ENCODE measurements at regions of chr1 and their contacts with region 1.

Region 1: GRCh38 chr1:212477014-212477679 is 44.4 kb downstream of the NENF start:
- DNase-seq: peak; percentile 86
- ATAC-seq: peak; percentile 93
- H3K4me3 Mint-ChIP-seq: no peak overlapping the region
- H3K27ac Mint-ChIP-seq: no peak overlapping the region
- H3K4me1 Mint-ChIP-seq: peaks cover 25% of the 10 kb centered on the region
- H3K27me3 Mint-ChIP-seq: peaks cover 20% of the 10 kb centered on the region

Region 2: DNA sequence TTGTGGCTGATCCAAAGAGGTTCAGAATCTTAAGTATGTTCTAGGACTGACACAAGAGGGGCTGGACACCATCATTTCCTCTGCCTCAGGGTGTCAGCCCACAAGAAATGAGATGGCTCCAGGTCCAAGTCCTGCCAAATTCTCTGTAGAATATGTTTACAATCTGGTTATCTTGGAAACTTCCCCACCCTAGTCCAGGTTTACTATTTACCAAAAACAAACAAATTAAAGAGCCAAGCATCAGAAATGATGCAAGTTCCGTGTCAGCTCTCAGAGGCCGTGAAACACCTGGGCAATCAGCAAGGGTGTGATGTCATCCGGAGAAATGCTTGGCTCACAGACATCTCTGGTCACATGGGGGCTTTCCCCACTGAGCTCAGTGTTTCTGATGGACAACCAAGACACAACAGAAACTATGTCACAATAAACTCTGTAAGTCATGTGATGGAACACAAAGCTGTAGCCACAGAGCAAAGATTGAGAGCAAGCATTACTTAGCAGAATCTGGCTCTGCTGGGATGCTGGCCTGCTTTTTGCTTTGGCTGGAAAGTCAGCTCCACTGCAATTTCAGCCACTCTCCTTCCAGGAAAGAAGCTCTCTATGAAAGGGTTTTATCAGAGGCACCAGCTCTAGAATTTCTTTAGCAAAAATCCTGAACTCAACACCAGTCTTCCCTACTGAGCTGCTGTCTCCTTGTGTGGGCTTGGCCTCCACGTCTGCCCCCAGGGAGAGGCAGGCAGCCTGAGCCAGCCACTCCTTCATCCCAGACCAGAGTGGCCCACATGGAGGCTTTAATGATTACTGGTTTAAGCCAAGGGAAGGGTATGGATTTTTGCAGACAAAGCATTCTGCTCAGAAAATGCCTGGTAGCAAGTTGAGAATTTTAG is 11.5 kb after region 1 on chr1:
- CTCF ChIA-PET with region 1: interaction called, 20 read pairs
- DNase-seq: peak; percentile 54
- ATAC-seq: peak; percentile 55
- H3K4me3 Mint-ChIP-seq: no peak overlapping the region
- H3K27ac Mint-ChIP-seq: no peak overlapping the region
- H3K4me1 Mint-ChIP-seq: peaks cover 11% of the 10 kb centered on the region
- H3K27me3 Mint-ChIP-seq: peaks cover 8% of the 10 kb centered on the region

Region 3: DNA sequence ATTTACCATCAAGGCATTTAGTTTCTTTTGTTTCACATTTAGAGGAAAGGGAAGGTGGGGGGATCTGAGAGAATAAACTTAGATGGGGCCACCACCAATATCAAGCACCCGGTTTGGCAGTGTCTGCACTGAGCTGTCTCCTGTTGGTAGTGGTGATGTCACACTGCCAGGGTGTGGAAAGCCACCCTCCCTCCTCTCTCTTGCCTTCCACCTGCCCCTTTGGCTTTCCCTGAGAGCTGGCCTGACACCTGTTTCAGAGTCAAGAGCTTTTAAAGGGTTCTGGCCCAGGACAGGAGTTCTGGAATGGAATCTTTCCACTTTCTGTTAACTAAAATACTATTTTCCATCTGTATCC is 144.8 kb after region 1 on chr1:
- CTCF ChIA-PET with region 1: interaction called, 12 read pairs
- DNase-seq: no peak
- ATAC-seq: peak; percentile 17
- H3K4me3 Mint-ChIP-seq: no peak overlapping the region
- H3K27ac Mint-ChIP-seq: no peak overlapping the region
- H3K4me1 Mint-ChIP-seq: peaks cover 15% of the 10 kb centered on the region
- H3K27me3 Mint-ChIP-seq: peaks cover 3% of the 10 kb centered on the region

Region 4: GRCh38 chr1:212651521-212651920 is 174.4 kb after region 1 on chr1:
- CTCF ChIA-PET with region 1: interaction called, 12 read pairs
- DNase-seq: no peak
- ATAC-seq: no peak
- H3K4me3 Mint-ChIP-seq: no peak overlapping the region
- H3K27ac Mint-ChIP-seq: no peak overlapping the region
- H3K4me1 Mint-ChIP-seq: peaks cover 2% of the 10 kb centered on the region
- H3K27me3 Mint-ChIP-seq: peaks cover 10% of the 10 kb centered on the region

Region 5: GRCh38 chr1:212994926-212995325 is 517.8 kb after region 1 on chr1:
- CTCF ChIA-PET with region 1: interaction called, 15 read pairs
- DNase-seq: no peak
- ATAC-seq: no peak
- H3K4me3 Mint-ChIP-seq: no peak overlapping the region
- H3K27ac Mint-ChIP-seq: no peak overlapping the region
- H3K4me1 Mint-ChIP-seq: peaks cover 4% of the 10 kb centered on the region
- H3K27me3 Mint-ChIP-seq: no peaks in the 10 kb centered on the region

Measured in activated CD8-positive, alpha-beta memory T cell treated with anti-CD3 and anti-CD28 coated beads, Interleukin-2, amount 10 ng/mL, durations not matched to agents 7 days and 5 days (primary cell).